Endothelial cell of umbilical vein (primary cell): ENCODE measurements at regions of chr17 and their contacts with region 1.

Region 1: GRCh38 chr17:73371285-73371684 is 59.5 kb upstream of the CDC42EP4 start:
- DNase-seq: no peak
- H3K4me3 ChIP-seq: no peak overlapping the region
- H3K27ac ChIP-seq: no peak overlapping the region
- H3K4me1 ChIP-seq: no peaks in the 10 kb centered on the region
- H3K27me3 ChIP-seq: peaks cover 0 to 3% of the 10 kb centered on the region in 2 experiments
- CTCF ChIP-seq: no peak
- POLR2A ChIP-seq: no peak

Region 2: GRCh38 chr17:72556944-72557826 is 814.1 kb before region 1 on chr17:
- CTCF ChIA-PET with region 1: interaction called, 28 read pairs
- POLR2A ChIA-PET with region 1: no interaction called
- dilution Hi-C with region 1: no loop called
- intact Hi-C with region 1: loop called (anchors 5 kb)
- DNase-seq: peak; percentile 22
- H3K4me3 ChIP-seq: no peak overlapping the region
- H3K27ac ChIP-seq: no peak overlapping the region
- H3K4me1 ChIP-seq: no peaks in the 10 kb centered on the region
- H3K27me3 ChIP-seq: no peaks in the 10 kb centered on the region
- CTCF ChIP-seq: peak; percentile 66 to 72
- POLR2A ChIP-seq: no peak

Region 3: GRCh38 chr17:73231841-73232586 is 139.3 kb before region 1 on chr17:
- CTCF ChIA-PET with region 1: interaction called, 15 read pairs
- POLR2A ChIA-PET with region 1: no interaction called
- dilution Hi-C with region 1: no loop called
- intact Hi-C with region 1: no loop called
- DNase-seq: peak; percentile 96
- H3K4me3 ChIP-seq: peak overlapping the region; percentile 83 to 93 (median 84)
- H3K27ac ChIP-seq: peak overlapping the region; percentile 83
- H3K4me1 ChIP-seq: peaks cover 38% of the 10 kb centered on the region
- H3K27me3 ChIP-seq: no peaks in the 10 kb centered on the region
- CTCF ChIP-seq: no peak
- POLR2A ChIP-seq: peak; percentile 29

Region 4: DNA sequence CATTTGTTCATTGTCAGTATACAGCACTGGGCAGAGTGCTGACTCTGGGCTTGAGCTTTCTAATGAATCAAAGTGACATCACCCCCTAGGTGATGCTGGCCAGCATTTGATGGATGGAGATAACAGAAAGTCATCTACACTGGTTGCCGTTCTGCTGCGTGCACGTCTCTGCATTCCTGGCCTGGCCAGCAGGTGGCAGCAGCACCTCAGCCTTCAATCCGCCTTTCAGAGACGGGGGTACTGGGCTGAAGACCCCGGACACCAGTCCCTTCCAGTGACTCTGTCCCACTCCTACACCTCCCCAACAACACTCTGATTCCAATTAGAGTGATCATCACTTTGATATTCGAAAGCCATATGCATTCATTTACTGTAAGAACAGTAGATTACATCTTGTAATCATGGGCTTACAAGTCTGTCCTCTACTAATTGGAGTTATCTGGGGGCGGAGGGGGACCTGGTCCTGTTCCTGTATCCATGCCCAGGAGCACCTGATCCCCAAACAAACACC is 115.6 kb before region 1 on chr17:
- CTCF ChIA-PET with region 1: interaction called, 376 read pairs
- POLR2A ChIA-PET with region 1: no interaction called
- dilution Hi-C with region 1: no loop called
- intact Hi-C with region 1: loop called (anchors 1 kb)
- DNase-seq: peak; percentile 53
- H3K4me3 ChIP-seq: no peak overlapping the region
- H3K27ac ChIP-seq: no peak overlapping the region
- H3K4me1 ChIP-seq: no peaks in the 10 kb centered on the region
- H3K27me3 ChIP-seq: no peaks in the 10 kb centered on the region
- CTCF ChIP-seq: peak; percentile 82 to 96
- POLR2A ChIP-seq: no peak

Region 5: DNA sequence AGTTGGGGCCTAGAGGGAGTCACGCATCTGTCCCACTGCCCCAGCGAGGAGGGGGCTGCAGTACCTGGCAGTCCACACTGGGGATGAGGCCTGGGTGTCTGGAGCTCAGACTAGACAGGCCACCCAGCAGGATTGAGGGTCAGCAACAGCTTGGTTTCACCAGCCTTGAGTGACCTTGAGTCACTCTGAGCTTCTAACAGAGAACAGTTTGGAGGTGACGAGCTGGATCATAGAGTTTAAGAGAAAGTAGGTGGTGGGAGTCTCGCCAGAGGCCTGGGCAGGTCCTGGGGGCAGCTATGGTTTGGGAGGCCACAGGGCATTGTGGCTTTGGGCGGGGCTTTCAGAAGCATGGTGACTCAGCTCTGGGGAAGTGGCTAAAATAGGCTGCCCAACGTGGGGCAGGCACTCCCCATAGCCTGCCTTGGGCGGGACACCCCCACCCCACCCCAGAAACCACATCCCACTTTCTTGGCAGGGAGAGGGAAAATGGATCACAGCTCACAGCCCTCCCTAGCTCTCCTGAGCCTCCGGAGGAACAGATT is 80.0 kb before region 1 on chr17:
- CTCF ChIA-PET with region 1: interaction called, 12 read pairs
- POLR2A ChIA-PET with region 1: no interaction called
- dilution Hi-C with region 1: no loop called
- intact Hi-C with region 1: no loop called
- DNase-seq: peak; percentile 18
- H3K4me3 ChIP-seq: no peak overlapping the region
- H3K27ac ChIP-seq: peak overlapping the region; percentile 79
- H3K4me1 ChIP-seq: peaks cover 25% of the 10 kb centered on the region
- H3K27me3 ChIP-seq: no peaks in the 10 kb centered on the region
- CTCF ChIP-seq: no peak
- POLR2A ChIP-seq: no peak

Region 6: GRCh38 chr17:73316919-73317505 is 54.3 kb before region 1 on chr17:
- CTCF ChIA-PET with region 1: interaction called, 70 read pairs
- POLR2A ChIA-PET with region 1: no interaction called
- dilution Hi-C with region 1: no loop called
- intact Hi-C with region 1: no loop called
- DNase-seq: no peak
- H3K4me3 ChIP-seq: no peak overlapping the region
- H3K27ac ChIP-seq: no peak overlapping the region
- H3K4me1 ChIP-seq: peaks cover 5% of the 10 kb centered on the region
- H3K27me3 ChIP-seq: peaks cover 2 to 4% of the 10 kb centered on the region in 2 experiments
- CTCF ChIP-seq: no peak
- POLR2A ChIP-seq: no peak

Region 7: GRCh38 chr17:73357318-73357717 is 14.0 kb before region 1 on chr17:
- CTCF ChIA-PET with region 1: interaction called, 13 read pairs
- POLR2A ChIA-PET with region 1: no interaction called
- dilution Hi-C with region 1: no loop called
- intact Hi-C with region 1: no loop called
- DNase-seq: no peak
- H3K4me3 ChIP-seq: no peak overlapping the region
- H3K27ac ChIP-seq: no peak overlapping the region
- H3K4me1 ChIP-seq: no peaks in the 10 kb centered on the region
- H3K27me3 ChIP-seq: no peaks in the 10 kb centered on the region
- CTCF ChIP-seq: no peak
- POLR2A ChIP-seq: no peak